ENCODE measurements at regions of chr12 and their contacts with region 1.

Region 1: GRCh38 chr12:27123642-27124041 is 41.3 kb upstream of the C12orf71 start:
- DNase-seq: no peak
- ATAC-seq: no peak
- H3K4me3 ChIP-seq: no peak overlapping the region
- H3K27ac ChIP-seq: no peak overlapping the region
- H3K4me1 ChIP-seq: no peaks in the 10 kb centered on the region
- H3K27me3 ChIP-seq: no peaks in the 10 kb centered on the region
- CTCF ChIP-seq: peak in 4 of 12 donors; percentile 8 to 24 (median 16)
- POLR2A ChIP-seq: no peak

Region 2: DNA sequence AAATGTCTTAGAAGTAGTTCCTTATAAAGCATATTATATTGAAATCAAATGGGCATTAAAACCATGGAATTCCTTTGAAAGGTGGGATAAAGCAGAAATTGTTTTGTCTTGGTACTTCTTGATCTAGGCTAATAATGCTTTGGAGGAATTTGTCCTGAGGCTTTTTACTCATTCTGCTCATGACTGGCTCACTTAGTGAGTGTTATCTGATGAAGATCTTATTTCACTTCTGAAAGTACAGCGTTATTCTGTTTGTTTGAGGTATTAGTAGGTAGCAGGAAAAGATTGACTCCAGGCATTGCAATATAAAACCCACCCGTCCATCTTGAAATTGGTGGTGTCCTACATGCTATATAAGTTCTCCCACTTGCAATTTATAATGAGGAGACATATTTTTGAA is 46.7 kb before region 1 on chr12:
- intact Hi-C with region 1: loop called in 1 of 10 experiments (anchors 10 kb)
- DNase-seq: no peak
- ATAC-seq: no peak
- H3K4me3 ChIP-seq: no peak overlapping the region
- H3K27ac ChIP-seq: no peak overlapping the region
- H3K4me1 ChIP-seq: no peaks in the 10 kb centered on the region
- H3K27me3 ChIP-seq: no peaks in the 10 kb centered on the region
- CTCF ChIP-seq: no peak
- POLR2A ChIP-seq: no peak

Measured in heart left ventricle (tissue), 16 donors.